Endothelial cell of umbilical vein (primary cell): ENCODE measurements at regions of chr7 and their contacts with region 1.

Region 1: DNA sequence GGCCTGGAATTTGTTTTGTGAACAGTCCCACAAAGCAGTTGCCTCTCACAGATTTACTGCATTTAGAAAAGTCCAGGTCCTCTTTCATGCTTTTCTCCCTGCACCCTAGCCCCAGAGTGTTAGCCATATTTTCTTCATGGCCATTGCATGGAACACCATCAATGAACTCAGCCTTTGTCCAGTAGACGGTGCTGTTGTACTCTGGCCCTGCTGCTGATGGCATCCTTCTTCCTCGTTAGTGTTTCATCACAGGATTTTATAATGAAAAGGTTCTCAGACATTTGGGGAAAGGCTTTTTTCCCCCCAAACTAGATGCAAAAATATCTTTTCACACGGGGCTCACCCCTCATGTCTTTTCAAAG is 93.0 kb upstream of the SLC25A13 start:
- DNase-seq: peak; percentile 10
- H3K4me3 ChIP-seq: no peak overlapping the region
- H3K27ac ChIP-seq: no peak overlapping the region
- H3K4me1 ChIP-seq: peaks cover 6% of the 10 kb centered on the region
- H3K27me3 ChIP-seq: no peaks in the 10 kb centered on the region
- CTCF ChIP-seq: peak; percentile 40 to 41
- POLR2A ChIP-seq: no peak

Region 2: GRCh38 chr7:96236198-96237039 is 178.5 kb before region 1 on chr7:
- CTCF ChIA-PET with region 1: no interaction called
- POLR2A ChIA-PET with region 1: no interaction called
- dilution Hi-C with region 1: no loop called
- intact Hi-C with region 1: loop called (anchors 5 kb)
- DNase-seq: peak; percentile 97
- H3K4me3 ChIP-seq: no peak overlapping the region
- H3K27ac ChIP-seq: peak overlapping the region; percentile 2
- H3K4me1 ChIP-seq: peaks cover 18% of the 10 kb centered on the region
- H3K27me3 ChIP-seq: no peaks in the 10 kb centered on the region
- CTCF ChIP-seq: no peak
- POLR2A ChIP-seq: no peak

Region 3: GRCh38 chr7:97298561-97298960 is 883.6 kb after region 1 on chr7:
- CTCF ChIA-PET with region 1: no interaction called
- POLR2A ChIA-PET with region 1: no interaction called
- dilution Hi-C with region 1: no loop called
- intact Hi-C with region 1: no loop called
- DNase-seq: no peak
- H3K4me3 ChIP-seq: no peak overlapping the region
- H3K27ac ChIP-seq: no peak overlapping the region
- H3K4me1 ChIP-seq: no peaks in the 10 kb centered on the region
- H3K27me3 ChIP-seq: no peaks in the 10 kb centered on the region
- CTCF ChIP-seq: no peak
- POLR2A ChIP-seq: no peak